ENCODE measurements at regions of chr2 and their contacts with region 1.

Region 1: DNA sequence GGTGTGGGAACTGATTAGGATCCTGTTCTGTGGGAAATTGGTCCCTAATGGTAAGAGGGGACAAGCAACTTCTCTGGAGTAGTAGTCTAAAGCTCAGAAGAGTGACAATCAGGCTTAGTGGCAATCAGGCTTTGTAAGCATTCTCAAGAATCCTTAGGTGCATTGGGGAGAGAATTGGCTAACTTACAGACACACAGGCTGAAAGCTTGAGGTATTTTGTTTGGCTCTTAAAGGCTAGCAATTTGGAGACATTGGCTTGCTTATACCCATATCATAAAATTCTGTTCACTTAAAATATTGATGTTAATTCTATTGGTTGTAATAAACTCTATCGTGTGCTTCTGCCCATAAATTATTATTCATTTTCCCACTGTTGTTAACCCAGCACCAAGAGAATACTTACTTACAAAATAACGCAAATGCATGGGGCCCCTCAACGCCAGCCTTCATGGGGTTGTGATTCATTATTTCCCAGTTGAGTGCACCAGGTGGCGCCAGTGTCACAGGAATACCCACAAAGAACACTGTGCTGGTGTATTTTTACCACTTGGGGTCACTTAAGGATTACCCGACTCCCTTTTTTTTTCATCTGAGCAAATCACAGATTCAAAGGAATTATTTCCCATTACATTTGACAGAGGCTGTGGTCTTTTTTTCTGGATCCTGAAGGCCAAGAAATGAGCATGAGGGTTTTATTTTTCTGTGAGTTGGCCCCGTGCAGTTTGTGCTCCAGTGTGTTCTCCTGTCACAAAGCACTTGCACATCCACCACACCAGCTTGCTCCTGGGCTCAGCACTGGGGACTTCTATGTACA is 45.5 kb downstream of the DDX1 start:
- H3K4me3 Mint-ChIP-seq: no peak overlapping the region
- H3K27ac Mint-ChIP-seq: no peak overlapping the region
- H3K4me1 Mint-ChIP-seq: peaks cover 8% of the 10 kb centered on the region
- H3K27me3 Mint-ChIP-seq: no peaks in the 10 kb centered on the region

Region 2: GRCh38 chr2:15691586-15692310 is 54.6 kb after region 1 on chr2:
- intact Hi-C with region 1: no loop called
- H3K4me3 Mint-ChIP-seq: no peak overlapping the region
- H3K27ac Mint-ChIP-seq: no peak overlapping the region
- H3K4me1 Mint-ChIP-seq: peaks cover 5% of the 10 kb centered on the region
- H3K27me3 Mint-ChIP-seq: no peaks in the 10 kb centered on the region

Region 3: DNA sequence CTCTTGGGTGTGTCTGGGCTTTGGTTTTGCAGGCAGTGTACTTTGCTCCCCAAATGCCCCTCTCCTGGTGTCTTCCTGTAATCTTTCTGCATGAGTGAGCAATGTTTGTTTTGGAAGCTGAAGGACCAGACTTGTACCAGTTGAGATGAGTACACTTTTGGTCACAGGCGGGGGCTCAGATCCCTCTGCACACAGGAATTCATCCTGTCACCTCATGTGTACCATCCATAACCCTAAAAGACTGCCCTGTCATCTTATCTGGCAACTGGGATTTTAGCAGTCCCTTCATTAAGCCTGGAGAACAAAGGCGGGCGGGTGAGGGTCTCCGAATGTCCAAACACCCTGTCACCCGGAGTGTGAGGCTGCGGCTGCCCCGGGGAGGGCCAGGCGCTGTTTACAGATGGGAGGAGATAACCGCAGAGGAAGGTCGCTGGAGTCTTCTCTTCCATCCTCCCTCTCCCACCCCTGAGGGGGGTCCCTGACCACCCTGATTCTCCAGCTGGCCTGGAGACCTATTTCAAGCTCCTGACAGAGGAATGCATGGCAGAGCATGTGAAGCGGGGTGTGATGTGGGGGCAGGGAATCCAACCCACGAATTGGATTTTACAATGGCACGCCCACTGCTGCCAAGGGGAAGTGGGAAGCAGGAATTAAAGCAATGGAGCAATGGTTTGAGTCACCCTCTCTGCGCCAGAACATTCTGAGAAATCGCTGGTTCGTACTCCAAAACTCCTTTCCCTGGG is 145.0 kb after region 1 on chr2:
- intact Hi-C with region 1: no loop called
- H3K4me3 Mint-ChIP-seq: no peak overlapping the region
- H3K27ac Mint-ChIP-seq: no peak overlapping the region
- H3K4me1 Mint-ChIP-seq: no peaks in the 10 kb centered on the region
- H3K27me3 Mint-ChIP-seq: peaks cover 6% of the 10 kb centered on the region

Region 4: DNA sequence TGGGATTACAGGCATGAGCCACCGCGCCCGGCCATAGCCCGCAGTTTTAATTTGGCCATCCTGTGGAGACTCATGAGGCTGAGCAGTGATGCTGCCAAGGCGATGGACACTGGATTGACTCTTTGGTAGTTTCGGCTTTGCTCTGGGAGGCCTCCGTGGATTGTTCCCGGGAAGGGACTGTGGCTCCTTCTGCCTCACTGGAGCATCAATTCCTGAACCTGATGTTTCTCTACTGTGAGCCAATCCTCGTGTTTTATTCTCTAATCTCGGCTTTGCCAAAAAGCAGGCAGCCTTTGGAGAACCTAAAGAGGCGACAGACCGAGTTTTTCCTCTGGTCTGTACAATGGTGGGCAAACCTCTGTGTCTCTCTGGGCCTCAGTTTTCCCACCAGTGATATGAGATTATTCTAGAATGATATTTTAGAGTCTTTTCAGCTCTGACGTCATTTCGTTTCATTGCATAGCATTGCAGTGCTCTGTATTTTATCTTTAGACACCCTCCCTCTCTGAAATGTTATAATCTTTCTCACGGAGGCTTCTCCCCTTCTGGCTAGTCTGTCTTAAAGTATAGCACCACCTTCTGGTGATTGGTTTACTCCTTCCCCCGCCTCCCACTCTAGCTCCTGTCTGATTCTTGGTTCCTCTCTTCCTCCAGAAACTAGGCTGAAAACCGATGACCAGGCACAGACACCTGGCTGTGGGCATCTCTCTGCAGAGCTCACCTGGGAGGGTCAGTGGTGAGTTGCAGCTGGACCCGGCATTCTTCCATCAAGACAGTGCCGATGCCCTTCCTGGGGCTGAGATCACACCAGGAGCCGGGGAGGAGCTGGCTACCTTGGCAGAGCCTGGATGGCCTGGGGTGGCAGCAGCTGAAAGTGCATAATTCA is 644.5 kb after region 1 on chr2:
- intact Hi-C with region 1: loop called (anchors 2 kb)
- H3K4me3 Mint-ChIP-seq: no peak overlapping the region
- H3K27ac Mint-ChIP-seq: no peak overlapping the region
- H3K4me1 Mint-ChIP-seq: no peaks in the 10 kb centered on the region
- H3K27me3 Mint-ChIP-seq: no peaks in the 10 kb centered on the region

Region 5: GRCh38 chr2:16487686-16488085 is 850.5 kb after region 1 on chr2:
- intact Hi-C with region 1: loop called (anchors 5 kb)
- H3K4me3 Mint-ChIP-seq: no peak overlapping the region
- H3K27ac Mint-ChIP-seq: no peak overlapping the region
- H3K4me1 Mint-ChIP-seq: no peaks in the 10 kb centered on the region
- H3K27me3 Mint-ChIP-seq: peaks cover 3% of the 10 kb centered on the region

Region 6: DNA sequence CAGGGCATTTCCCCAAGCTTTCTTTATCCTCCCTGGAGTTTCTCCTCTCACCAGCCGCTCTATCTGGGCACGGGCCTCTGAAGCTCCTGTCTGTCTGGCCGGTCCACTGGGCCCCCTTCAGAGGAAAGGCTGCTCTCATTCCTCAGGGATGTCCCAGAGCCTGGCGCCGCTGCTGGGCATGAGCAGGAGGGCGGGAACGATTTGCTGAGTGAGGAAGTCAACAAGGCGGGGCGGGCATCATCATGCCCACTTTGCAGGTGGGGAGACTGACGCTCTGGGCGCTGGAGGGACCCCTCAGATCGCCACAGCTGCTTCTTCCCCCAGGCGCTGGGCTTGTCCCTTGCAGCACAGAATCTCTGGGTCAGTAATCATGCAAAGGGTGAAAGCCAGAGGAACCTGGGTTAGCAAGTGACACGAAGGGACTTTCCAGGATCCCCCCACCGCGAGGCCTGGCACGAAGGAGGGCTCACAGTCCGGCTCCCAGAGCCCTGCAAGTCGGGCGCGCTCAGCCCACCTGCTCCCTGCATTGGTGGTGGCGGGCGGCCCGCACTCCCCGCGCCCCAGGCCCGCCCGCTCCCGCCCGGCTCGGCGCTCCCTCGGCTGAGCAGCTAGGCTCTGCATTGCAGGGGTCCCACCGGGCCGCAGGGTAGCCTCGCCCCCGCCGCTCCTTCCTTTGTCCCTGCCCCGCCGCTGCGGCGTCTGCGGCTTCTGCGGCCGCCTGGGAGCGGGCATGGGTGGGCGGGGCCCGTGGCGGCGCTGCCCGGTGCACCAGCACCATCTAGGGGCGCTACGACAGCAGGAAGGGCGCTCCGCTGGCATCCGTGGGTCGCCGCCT is 870.7 kb after region 1 on chr2:
- intact Hi-C with region 1: loop called (anchors 2 kb)
- H3K4me3 Mint-ChIP-seq: peak overlapping the region; percentile 53
- H3K27ac Mint-ChIP-seq: no peak overlapping the region
- H3K4me1 Mint-ChIP-seq: no peaks in the 10 kb centered on the region
- H3K27me3 Mint-ChIP-seq: peaks cover 36% of the 10 kb centered on the region

Measured in dendritic cell treated with granulocyte-macrophage colony-stimulating factor and Interleukin-4, amounts not matched to agents 40 ng/mL and 50 ng/mL, for 4 days (primary cell).